H1 (cell line): ENCODE measurements at regions of chr18 and their contacts with region 1.

Region 1: DNA sequence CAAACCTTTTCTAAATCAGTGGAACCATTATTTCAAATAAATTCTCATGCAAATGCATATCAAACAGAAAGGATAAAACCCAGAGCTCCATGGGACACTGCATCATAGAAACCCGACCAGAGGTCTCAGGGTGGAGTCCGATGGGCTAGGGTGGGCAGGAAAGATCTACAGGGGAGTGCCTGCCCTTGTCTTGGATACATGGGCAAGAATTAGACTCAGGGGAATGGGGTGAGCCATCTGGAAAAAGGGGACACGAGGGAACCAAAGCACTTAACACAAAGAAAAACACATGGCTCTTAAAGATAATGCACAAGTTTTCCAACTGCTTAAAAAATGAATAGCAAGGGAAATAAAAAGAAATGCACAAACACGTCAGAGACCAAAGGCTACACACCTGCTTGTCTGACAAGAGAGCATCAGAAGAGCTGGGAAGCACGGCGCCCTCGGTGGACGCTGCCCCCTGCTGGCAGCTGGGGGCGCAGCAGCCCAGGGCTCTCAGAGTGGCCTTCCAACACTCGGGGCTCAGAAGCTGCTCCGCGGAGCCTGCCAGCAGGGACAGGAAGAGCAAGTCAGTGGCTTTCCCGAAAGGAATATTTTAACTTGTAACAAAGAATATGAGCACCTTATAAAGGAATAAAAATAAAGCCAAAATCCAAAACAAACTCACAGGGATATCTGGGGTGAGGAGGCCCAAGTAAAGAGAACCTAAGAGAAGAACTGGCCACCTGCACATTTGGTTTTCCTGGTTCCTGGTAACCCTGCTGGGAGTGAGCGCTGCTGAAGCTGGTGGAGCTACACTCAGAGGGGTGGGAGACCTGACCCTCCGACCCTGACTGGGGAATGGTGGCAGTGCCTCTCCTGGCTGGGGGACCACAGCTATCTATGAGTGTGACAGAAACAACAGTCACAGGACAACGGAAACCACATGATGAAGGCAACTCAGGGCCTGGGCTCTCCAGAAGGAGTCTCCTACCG is 54.5 kb downstream of the SIGLEC15 start:
- DNase-seq: peak; percentile 71 to 91
- H3K4me3 ChIP-seq: no peak overlapping the region
- H3K27ac ChIP-seq: no peak overlapping the region
- H3K4me1 ChIP-seq: no peaks in the 10 kb centered on the region
- H3K27me3 ChIP-seq: no peaks in the 10 kb centered on the region
- CTCF ChIP-seq: peak; percentile 97 to 99 (median 99)
- EP300 ChIP-seq: no peak
- POLR2A ChIP-seq: no peak
- RAD21 ChIP-seq: peak; percentile 90 to 93

Region 2: GRCh38 chr18:45715341-45715740 is 164.6 kb before region 1 on chr18:
- CTCF ChIA-PET with region 1: interaction called, 13 read pairs
- POLR2A ChIA-PET with region 1: no interaction called
- DNase-seq: no peak
- H3K4me3 ChIP-seq: no peak overlapping the region
- H3K27ac ChIP-seq: no peak overlapping the region
- H3K4me1 ChIP-seq: no peaks in the 10 kb centered on the region
- H3K27me3 ChIP-seq: no peaks in the 10 kb centered on the region
- CTCF ChIP-seq: no peak
- EP300 ChIP-seq: no peak
- POLR2A ChIP-seq: no peak
- RAD21 ChIP-seq: no peak

Region 3: GRCh38 chr18:45839414-45840395 is 40.3 kb before region 1 on chr18:
- CTCF ChIA-PET with region 1: interaction called, 17 read pairs
- POLR2A ChIA-PET with region 1: no interaction called
- DNase-seq: peak in 1 of 2 experiments; percentile 52
- H3K4me3 ChIP-seq: no peak overlapping the region
- H3K27ac ChIP-seq: no peak overlapping the region
- H3K4me1 ChIP-seq: peaks cover 6 to 19% (median 10%) of the 10 kb centered on the region in 4 experiments
- H3K27me3 ChIP-seq: peaks cover 8 to 32% (median 25%) of the 10 kb centered on the region in 4 experiments
- CTCF ChIP-seq: peak; percentile 50 to 79 (median 78)
- EP300 ChIP-seq: no peak
- POLR2A ChIP-seq: no peak
- RAD21 ChIP-seq: peak; percentile 80 to 83

Region 4: DNA sequence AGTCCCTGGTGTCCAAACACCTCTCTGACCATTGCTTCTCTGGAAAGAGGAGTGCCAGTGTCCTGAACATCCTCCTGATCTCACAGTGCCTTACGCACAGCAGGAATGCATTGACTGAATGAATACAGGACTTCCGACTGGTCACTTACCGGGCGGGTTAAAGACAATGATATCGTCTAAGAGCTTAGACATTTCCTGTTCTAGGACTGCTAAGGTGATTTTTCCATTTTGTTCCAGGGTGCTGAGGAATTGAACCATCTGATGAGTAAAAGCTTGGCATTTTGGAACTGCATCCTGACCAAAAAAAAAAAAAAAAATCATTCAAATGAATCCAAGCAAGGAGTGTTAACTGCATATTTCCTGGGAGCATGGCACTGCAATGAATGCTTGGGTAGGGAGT is 14.5 kb before region 1 on chr18:
- CTCF ChIA-PET with region 1: interaction called, 63 read pairs
- POLR2A ChIA-PET with region 1: no interaction called
- DNase-seq: no peak
- H3K4me3 ChIP-seq: no peak overlapping the region
- H3K27ac ChIP-seq: no peak overlapping the region
- H3K4me1 ChIP-seq: no peaks in the 10 kb centered on the region
- H3K27me3 ChIP-seq: no peaks in the 10 kb centered on the region
- CTCF ChIP-seq: no peak
- EP300 ChIP-seq: no peak
- POLR2A ChIP-seq: no peak
- RAD21 ChIP-seq: no peak

Region 5: GRCh38 chr18:45910405-45911023 is 30.5 kb after region 1 on chr18:
- CTCF ChIA-PET with region 1: interaction called, 23 read pairs
- POLR2A ChIA-PET with region 1: no interaction called
- DNase-seq: peak; percentile 33 to 72
- H3K4me3 ChIP-seq: no peak overlapping the region
- H3K27ac ChIP-seq: no peak overlapping the region
- H3K4me1 ChIP-seq: no peaks in the 10 kb centered on the region
- H3K27me3 ChIP-seq: no peaks in the 10 kb centered on the region
- CTCF ChIP-seq: peak; percentile 89
- EP300 ChIP-seq: no peak
- POLR2A ChIP-seq: no peak
- RAD21 ChIP-seq: peak; percentile 90 to 91

Region 6: GRCh38 chr18:45935591-45936335 is 55.8 kb after region 1 on chr18:
- CTCF ChIA-PET with region 1: no interaction called
- POLR2A ChIA-PET with region 1: no interaction called
- DNase-seq: no peak
- H3K4me3 ChIP-seq: no peak overlapping the region
- H3K27ac ChIP-seq: no peak overlapping the region
- H3K4me1 ChIP-seq: no peaks in the 10 kb centered on the region
- H3K27me3 ChIP-seq: no peaks in the 10 kb centered on the region
- CTCF ChIP-seq: no peak
- EP300 ChIP-seq: no peak
- POLR2A ChIP-seq: no peak
- RAD21 ChIP-seq: no peak